Right ventricle myocardium superior (tissue), 1 donor: ENCODE measurements at regions of chr20 and their contacts with region 1.

Region 1: GRCh38 chr20:40962730-40963504 is 65.7 kb upstream of the TOP1 start:
- DNase-seq: peak; percentile 78
- ATAC-seq: peak; percentile 94

Region 2: DNA sequence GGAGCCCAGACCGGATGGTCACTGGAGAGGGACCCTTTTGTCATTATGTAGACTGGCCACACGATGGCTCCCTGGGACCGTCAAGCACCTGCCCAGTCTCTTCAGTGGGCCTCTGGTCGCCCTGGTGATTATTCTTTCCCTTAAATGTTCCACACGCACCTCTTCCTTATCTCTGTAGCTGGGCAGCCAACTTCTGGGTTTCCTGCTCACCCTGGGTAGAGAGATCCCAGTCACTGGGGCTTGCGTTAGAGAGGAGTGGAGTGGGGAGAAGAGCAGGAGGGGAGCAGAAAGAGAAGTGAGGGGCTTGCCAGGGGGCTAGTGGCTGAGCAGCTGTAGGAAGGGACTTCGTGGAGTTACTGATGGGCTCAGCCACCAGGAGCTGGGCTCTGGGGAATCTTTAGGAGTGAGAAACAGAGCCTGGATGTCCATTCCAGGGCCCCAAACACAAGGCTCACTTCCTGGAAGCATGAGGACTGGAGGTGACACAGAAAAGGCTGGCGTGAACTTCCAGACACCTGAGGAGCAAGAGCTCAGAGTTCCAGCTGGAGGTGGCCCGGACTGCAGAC is 1850.7 kb before region 1 on chr20:
- intact Hi-C with region 1: loop called (anchors 5 kb)
- DNase-seq: peak; percentile 48
- ATAC-seq: peak; percentile 87

Region 3: GRCh38 chr20:39264506-39265172 is 1698.3 kb before region 1 on chr20:
- intact Hi-C with region 1: loop called (anchors 5 kb)
- DNase-seq: peak; percentile 52
- ATAC-seq: peak; percentile 74

Region 4: DNA sequence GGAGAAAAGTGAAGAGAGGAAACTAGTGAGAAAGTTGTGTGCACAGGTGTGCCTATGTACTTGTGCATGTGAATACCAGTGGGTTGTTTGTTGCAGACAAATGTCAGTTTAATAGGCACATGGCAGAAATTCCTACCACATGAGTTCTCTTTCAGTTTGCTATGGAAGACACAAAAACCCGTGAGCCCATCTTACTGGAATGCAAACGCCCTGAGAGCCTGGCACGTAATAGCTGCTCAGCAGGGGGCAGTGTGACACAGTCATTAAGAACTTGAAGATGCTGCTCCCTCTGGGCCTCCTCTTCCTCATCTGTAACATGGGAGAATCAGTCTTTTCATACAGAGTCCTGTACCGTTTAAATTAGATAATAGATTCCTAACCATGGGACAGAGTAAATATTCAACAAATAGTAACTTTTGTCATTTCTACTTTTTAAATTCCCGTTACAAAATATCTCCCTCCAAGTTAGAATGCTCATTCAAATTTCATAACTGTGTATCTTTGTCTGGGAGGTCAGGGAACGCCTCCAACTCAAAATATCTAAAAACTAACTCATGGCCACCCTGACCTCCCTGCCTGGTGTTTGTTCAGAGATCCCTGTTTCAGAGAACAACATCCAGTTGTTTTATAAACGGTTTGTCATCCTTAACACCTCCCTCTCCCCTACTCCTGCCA is 1076.8 kb before region 1 on chr20:
- intact Hi-C with region 1: loop called (anchors 5 kb)
- DNase-seq: peak; percentile 83
- ATAC-seq: peak; percentile 90

Region 5: GRCh38 chr20:40741507-40742106 is 221.3 kb before region 1 on chr20:
- intact Hi-C with region 1: loop called (anchors 5 kb)
- DNase-seq: peak; percentile 49
- ATAC-seq: no peak

Region 6: DNA sequence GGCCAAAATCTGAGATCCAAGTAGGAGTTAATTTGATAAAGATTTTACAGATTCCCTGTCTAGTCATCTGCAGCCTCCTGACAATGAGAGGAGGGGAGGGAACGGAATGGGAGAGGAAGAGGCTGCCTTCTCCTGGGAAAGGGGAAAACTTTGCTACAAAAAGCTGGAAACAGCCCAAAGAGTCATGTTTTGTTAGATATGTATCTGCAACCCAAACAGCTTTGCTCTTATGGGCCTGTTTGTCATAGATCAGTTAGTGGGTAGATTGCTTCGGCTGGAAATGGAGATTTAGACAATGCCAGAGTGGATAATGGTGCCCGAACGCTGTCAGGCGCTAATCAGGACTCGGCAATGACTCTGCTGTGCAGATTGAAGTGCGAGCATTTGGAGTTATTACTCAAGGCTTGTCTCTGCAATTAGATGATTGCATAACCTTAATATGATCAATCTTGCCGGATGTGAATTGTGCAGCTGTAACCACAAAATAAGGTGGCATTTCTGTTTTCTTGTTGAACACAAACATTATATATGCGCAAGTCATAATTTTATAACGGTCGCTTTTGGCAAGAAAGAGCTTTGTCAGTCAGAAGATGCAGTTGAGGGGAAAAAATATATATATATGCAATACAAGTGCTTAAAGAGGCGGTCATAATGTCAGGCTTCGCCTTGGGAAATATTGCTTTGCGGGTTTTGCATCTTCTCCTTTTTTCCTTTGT is 181.4 kb before region 1 on chr20:
- intact Hi-C with region 1: no loop called
- DNase-seq: no peak
- ATAC-seq: no peak